Naive thymus-derived CD8-positive, alpha-beta T cell (primary cell): ENCODE measurements at regions of chr12 and their contacts with region 1.

Region 1: GRCh38 chr12:107718606-107719005 is 33.0 kb downstream of the PWP1 start:
- DNase-seq: no peak
- ATAC-seq: no peak
- H3K4me3 Mint-ChIP-seq: no peak overlapping the region
- H3K27ac Mint-ChIP-seq: no peak overlapping the region
- H3K4me1 Mint-ChIP-seq: no peaks in the 10 kb centered on the region
- H3K27me3 Mint-ChIP-seq: no peaks in the 10 kb centered on the region

Region 2: GRCh38 chr12:107597695-107598410 is 120.8 kb before region 1 on chr12:
- POLR2A ChIA-PET with region 1: interaction called, 13 read pairs
- DNase-seq: no peak
- ATAC-seq: no peak
- H3K4me3 Mint-ChIP-seq: no peak overlapping the region
- H3K27ac Mint-ChIP-seq: no peak overlapping the region
- H3K4me1 Mint-ChIP-seq: peaks cover 0 to 6% (median 0%) of the 10 kb centered on the region in 4 donors
- H3K27me3 Mint-ChIP-seq: no peaks in the 10 kb centered on the region

Region 3: GRCh38 chr12:107760809-107761501 is 42.3 kb after region 1 on chr12 and contains the start of gene PRDM4:
- POLR2A ChIA-PET with region 1: no interaction called
- DNase-seq: peak; percentile 82 to 94 (median 90)
- ATAC-seq: peak; percentile 92 to 96
- H3K4me3 Mint-ChIP-seq: peak within 1 kb of the TSS; percentile 83 to 93 (median 90)
- H3K27ac Mint-ChIP-seq: peak within 1 kb of the TSS; percentile 82 to 96 (median 93)
- H3K4me1 Mint-ChIP-seq: peaks cover 12 to 39% (median 33%) of the 10 kb centered on the region in 4 donors
- H3K27me3 Mint-ChIP-seq: no peaks in the 10 kb centered on the region
- polyA plus RNA-seq, gene PRDM4: 11.1 to 19.1 (median 11.4) TPM

Region 4: GRCh38 chr12:107783406-107784376 is 65.1 kb after region 1 on chr12:
- POLR2A ChIA-PET with region 1: no interaction called
- DNase-seq: no peak
- ATAC-seq: no peak
- H3K4me3 Mint-ChIP-seq: no peak overlapping the region
- H3K27ac Mint-ChIP-seq: no peak overlapping the region
- H3K4me1 Mint-ChIP-seq: peaks cover 0 to 14% (median 0%) of the 10 kb centered on the region in 4 donors
- H3K27me3 Mint-ChIP-seq: peaks cover 10 to 20% (median 16%) of the 10 kb centered on the region in 5 donors